ENCODE measurements at regions of chr11 and their contacts with region 1.

Region 1: GRCh38 chr11:57644748-57645688 is 4.7 kb downstream of the YPEL4 start:
- DNase-seq: no peak
- H3K4me3 ChIP-seq: no peak overlapping the region
- H3K27ac ChIP-seq: peak overlapping the region; percentile 75
- H3K4me1 ChIP-seq: peaks cover 72% of the 10 kb centered on the region
- H3K27me3 ChIP-seq: no peaks in the 10 kb centered on the region
- CTCF ChIP-seq: peak; percentile 57 to 83 (median 65)
- POLR2A ChIP-seq: no peak

Region 2: GRCh38 chr11:57324886-57325734 is 319.9 kb before region 1 on chr11 and contains the start of gene TNKS1BP1:
- intact Hi-C with region 1: loop called (anchors 10 kb)
- DNase-seq: peak in 1 of 2 donors; percentile 99
- H3K4me3 ChIP-seq: peak within 1 kb of the TSS; percentile 89 to 96
- H3K27ac ChIP-seq: peak within 1 kb of the TSS; percentile 98
- H3K4me1 ChIP-seq: peaks cover 53% of the 10 kb centered on the region
- H3K27me3 ChIP-seq: no peaks in the 10 kb centered on the region
- CTCF ChIP-seq: no peak
- POLR2A ChIP-seq: peak; percentile 6 to 86
- total RNA-seq, gene TNKS1BP1: 159 TPM

Region 3: GRCh38 chr11:57456960-57457642 is 187.9 kb before region 1 on chr11:
- intact Hi-C with region 1: loop called (anchors 10 kb)
- DNase-seq: no peak
- H3K4me3 ChIP-seq: no peak overlapping the region
- H3K27ac ChIP-seq: no peak overlapping the region
- H3K4me1 ChIP-seq: peaks cover 39% of the 10 kb centered on the region
- H3K27me3 ChIP-seq: no peaks in the 10 kb centered on the region
- CTCF ChIP-seq: peak; percentile 90 to 98 (median 94)
- POLR2A ChIP-seq: no peak

Region 4: DNA sequence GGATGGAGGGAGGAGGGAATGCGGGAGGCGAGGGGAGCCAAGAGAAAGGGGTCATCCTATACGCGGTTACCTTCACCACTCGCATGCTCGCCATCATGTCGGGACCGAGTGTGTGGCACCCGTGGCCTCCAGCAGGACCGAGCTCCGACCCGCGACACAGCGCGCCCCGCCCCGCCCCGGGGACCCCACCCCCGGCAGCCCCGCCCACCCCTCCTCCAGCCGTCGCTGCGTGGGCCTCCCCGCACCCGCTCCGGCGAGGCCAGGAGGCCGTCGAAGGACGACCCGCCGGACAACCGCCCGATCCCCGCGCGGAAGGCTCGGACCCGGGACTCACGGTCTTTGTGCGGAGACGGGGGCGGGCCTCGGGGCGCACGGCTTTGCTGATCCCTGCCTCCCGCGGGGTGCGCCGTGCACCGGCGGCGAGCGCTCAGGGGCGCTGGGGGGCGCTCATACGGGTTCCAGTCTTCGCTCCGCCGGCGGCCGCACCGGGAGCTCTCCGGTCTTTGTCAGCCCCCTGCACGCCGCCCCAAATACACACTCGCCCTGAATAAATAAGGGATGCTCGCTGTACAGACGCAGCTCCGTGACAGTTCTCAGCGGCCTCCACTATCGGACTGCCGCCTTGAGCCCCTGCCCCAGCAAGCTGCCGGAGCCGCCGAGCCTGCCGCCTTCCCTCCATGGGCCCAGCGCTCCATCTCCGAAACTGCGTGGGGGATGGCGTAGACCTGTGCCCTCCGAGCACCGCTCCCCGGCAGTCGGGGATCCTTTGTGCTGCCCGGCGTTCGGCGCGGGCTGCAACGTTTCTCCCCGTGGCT is 77.3 kb before region 1 on chr11 and contains the start of gene UBE2L6:
- intact Hi-C with region 1: loop called (anchors 2 kb)
- DNase-seq: no peak
- H3K4me3 ChIP-seq: peak within 1 kb of the TSS; percentile 69 to 83
- H3K27ac ChIP-seq: peak within 1 kb of the TSS; percentile 93
- H3K4me1 ChIP-seq: peaks cover 31% of the 10 kb centered on the region
- H3K27me3 ChIP-seq: no peaks in the 10 kb centered on the region
- CTCF ChIP-seq: peak in 1 of 3 experiments; percentile 75
- POLR2A ChIP-seq: no peak
- total RNA-seq, gene UBE2L6: 48.1 TPM

Region 5: DNA sequence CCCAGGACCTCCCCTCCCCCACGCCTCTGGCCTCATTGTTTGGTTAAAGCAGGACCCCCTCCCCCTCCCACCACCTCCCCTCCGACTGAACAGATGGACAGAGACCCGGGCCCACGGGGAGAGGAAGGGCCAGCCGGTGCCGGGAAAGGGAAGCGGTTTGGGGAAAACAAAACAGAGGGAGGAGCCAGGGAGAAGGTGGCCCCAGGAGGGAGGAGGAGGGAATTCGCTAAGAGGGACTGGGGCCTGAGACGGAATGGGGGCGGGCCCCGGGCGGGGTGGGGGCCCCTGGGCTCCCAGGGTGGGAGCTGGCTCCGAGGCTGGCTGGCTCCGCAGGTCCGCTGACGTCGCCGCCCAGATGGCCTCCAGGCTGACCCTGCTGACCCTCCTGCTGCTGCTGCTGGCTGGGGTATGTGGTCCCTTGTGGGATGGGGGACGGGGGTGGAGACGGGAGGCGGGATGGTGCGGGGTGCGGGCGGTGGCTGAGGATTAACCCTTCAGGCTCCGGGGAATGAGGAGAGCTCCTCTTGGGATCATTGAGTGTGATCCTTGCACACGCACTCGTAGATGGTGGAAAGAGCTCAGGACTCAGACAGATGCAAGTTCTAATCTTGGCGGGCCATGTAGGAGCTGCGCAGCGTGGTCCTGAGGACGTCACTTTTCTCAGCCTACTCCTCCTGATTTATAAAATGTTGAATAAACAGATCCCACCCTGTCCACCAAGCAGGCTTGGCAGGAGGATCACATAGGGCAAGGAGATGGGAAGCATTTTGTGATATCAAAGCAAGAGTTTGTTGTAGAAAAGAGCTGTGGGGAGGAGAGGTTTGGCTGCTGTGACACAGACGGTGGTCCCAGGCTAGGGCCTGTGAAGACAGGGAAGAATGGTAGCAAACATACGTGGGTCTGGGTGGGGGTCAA is 46.8 kb before region 1 on chr11:
- intact Hi-C with region 1: loop called (anchors 2 kb)
- DNase-seq: peak in 1 of 2 donors; percentile 92
- H3K4me3 ChIP-seq: peak overlapping the region; percentile 61 to 83
- H3K27ac ChIP-seq: peak overlapping the region; percentile 92
- H3K4me1 ChIP-seq: peaks cover 30% of the 10 kb centered on the region
- H3K27me3 ChIP-seq: no peaks in the 10 kb centered on the region
- CTCF ChIP-seq: no peak
- POLR2A ChIP-seq: no peak

Measured in vagina (tissue), 2 donors.